ENCODE measurements at regions of chr15 and their contacts with region 1.

Region 1: DNA sequence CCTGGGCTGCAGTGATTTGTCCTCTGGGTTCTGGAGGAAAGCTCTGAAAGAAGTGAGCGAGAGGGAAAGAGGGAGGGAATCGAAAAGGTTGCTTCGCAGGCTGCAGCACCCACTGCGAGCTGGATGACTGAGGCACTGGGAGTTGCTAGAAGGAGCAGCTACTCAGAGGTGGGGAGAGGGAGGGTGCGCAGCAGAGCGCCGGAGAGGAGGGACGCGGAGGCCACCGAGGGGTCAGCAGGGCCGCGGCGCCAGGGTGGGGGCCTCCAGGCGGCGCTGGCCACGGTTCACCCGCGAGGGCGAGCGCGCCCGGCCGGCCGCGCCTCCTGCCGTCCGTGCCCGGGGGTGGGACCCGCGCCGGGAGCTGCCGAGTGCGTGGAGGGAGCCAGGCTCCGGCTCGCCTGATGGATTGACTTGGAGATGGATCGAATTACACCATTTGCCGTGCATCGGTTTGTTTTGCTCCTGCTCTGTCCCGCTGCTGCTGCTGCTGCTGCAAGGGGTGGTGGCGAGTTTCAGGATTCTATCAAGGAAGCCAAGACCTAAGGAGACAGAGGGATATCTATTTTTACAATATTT is at the start of gene SEMA6D:
- DNase-seq: peak; percentile 57
- H3K4me3 ChIP-seq: peak within 1 kb of the TSS; percentile 34 to 56 (median 48)
- H3K27ac ChIP-seq: no peak within 1 kb of the TSS
- H3K4me1 ChIP-seq: peaks cover 12% of the 10 kb centered on the region
- H3K27me3 ChIP-seq: peaks cover 10% of the 10 kb centered on the region
- CTCF ChIP-seq: peak in 1 of 2 donors; percentile 22
- total RNA-seq, gene SEMA6D: under 0.01 to 0.35 TPM

Region 2: DNA sequence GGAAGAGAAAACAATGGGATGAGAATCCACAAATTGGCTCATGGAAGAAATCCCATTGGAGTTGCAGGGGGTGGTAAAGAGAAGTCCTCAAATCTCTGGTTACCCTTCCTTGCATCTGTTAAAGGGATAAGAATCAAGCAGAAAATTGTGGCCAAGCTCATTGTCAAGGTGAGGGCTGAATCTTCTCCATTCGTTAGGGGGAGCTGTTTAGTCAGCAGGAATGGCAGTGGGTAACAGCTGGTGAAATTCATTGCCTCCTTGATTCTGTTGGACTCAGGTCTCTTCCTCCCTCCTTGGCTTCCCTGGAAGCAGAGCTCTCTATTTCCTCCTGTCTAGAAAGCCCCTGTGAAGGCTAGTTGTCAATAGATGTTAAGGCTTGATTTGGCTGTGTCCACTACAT is 342.9 kb before region 1 on chr15:
- CTCF ChIA-PET with region 1: interaction called, 3 read pairs
- dilution Hi-C with region 1: no loop called
- in situ Hi-C with region 1: no loop called
- intact Hi-C with region 1: loop called (anchors 5 kb)
- DNase-seq: peak; percentile 23
- H3K4me3 ChIP-seq: no peak overlapping the region
- H3K27ac ChIP-seq: no peak overlapping the region
- H3K4me1 ChIP-seq: no peaks in the 10 kb centered on the region
- H3K27me3 ChIP-seq: no peaks in the 10 kb centered on the region
- CTCF ChIP-seq: peak; percentile 33 to 65

Region 3: GRCh38 chr15:47610736-47611135 is 106.4 kb before region 1 on chr15:
- CTCF ChIA-PET with region 1: no interaction called
- dilution Hi-C with region 1: no loop called
- in situ Hi-C with region 1: no loop called
- intact Hi-C with region 1: no loop called
- DNase-seq: no peak
- H3K4me3 ChIP-seq: no peak overlapping the region
- H3K27ac ChIP-seq: no peak overlapping the region
- H3K4me1 ChIP-seq: no peaks in the 10 kb centered on the region
- H3K27me3 ChIP-seq: no peaks in the 10 kb centered on the region
- CTCF ChIP-seq: peak in 1 of 2 donors; percentile 6

Region 4: GRCh38 chr15:47750030-47750739 is 33.1 kb after region 1 on chr15:
- CTCF ChIA-PET with region 1: no interaction called
- dilution Hi-C with region 1: no loop called
- in situ Hi-C with region 1: no loop called
- intact Hi-C with region 1: loop called (anchors 5 kb)
- DNase-seq: peak; percentile 76
- H3K4me3 ChIP-seq: no peak overlapping the region
- H3K27ac ChIP-seq: no peak overlapping the region
- H3K4me1 ChIP-seq: peaks cover 13% of the 10 kb centered on the region
- H3K27me3 ChIP-seq: no peaks in the 10 kb centered on the region
- CTCF ChIP-seq: no peak

Region 5: GRCh38 chr15:47803767-47804166 is 86.6 kb after region 1 on chr15:
- CTCF ChIA-PET with region 1: no interaction called
- dilution Hi-C with region 1: no loop called
- in situ Hi-C with region 1: no loop called
- intact Hi-C with region 1: loop called (anchors 5 kb)
- DNase-seq: peak; percentile 65
- H3K4me3 ChIP-seq: no peak overlapping the region
- H3K27ac ChIP-seq: no peak overlapping the region
- H3K4me1 ChIP-seq: peaks cover 16% of the 10 kb centered on the region
- H3K27me3 ChIP-seq: no peaks in the 10 kb centered on the region
- CTCF ChIP-seq: no peak

Region 6: DNA sequence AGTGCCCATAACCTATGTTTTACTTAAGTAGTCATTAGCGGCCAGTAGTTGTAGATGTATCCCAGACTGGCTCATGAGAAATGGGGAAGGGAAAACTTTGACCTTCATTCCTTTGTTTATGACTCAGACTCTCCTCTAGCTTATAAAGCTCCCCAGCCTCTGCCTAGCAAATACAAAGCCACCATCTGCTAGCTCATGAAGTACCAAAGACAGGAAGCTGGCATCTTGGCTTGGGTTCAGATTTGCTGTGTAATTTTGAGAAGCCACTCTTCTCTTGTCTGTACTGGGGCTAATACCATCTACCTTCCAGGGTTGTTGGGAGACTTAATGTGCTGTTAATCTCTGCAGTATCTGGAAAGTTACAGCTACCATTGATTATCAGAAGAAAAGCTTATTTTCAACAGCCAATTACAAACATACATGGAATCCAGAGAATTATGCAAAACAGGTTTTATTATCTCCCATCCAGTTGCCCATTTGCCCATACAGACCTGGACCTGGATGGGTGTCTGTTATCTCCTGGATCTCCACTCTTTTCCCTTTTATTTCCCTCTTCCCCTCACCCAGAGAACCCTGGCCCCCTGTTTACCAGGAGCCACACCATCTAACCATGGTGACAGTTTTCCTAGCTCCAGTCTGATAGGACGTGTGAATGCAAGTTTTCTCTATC is 154.0 kb after region 1 on chr15:
- CTCF ChIA-PET with region 1: no interaction called
- dilution Hi-C with region 1: no loop called
- in situ Hi-C with region 1: no loop called
- intact Hi-C with region 1: loop called (anchors 5 kb)
- DNase-seq: peak; percentile 12
- H3K4me3 ChIP-seq: no peak overlapping the region
- H3K27ac ChIP-seq: no peak overlapping the region
- H3K4me1 ChIP-seq: no peaks in the 10 kb centered on the region
- H3K27me3 ChIP-seq: no peaks in the 10 kb centered on the region
- CTCF ChIP-seq: no peak

Region 7: GRCh38 chr15:48177766-48178647 is 460.9 kb after region 1 on chr15 and contains the start of gene MYEF2:
- CTCF ChIA-PET with region 1: no interaction called
- dilution Hi-C with region 1: no loop called
- in situ Hi-C with region 1: no loop called
- intact Hi-C with region 1: no loop called
- DNase-seq: peak; percentile 18
- H3K4me3 ChIP-seq: peak within 1 kb of the TSS; percentile 26 to 49 (median 47)
- H3K27ac ChIP-seq: no peak within 1 kb of the TSS
- H3K4me1 ChIP-seq: peaks cover 6% of the 10 kb centered on the region
- H3K27me3 ChIP-seq: peaks cover 11% of the 10 kb centered on the region
- CTCF ChIP-seq: no peak
- total RNA-seq, gene MYEF2: 2.3 to 5.0 TPM

Region 8: GRCh38 chr15:48285329-48286214 is 568.4 kb after region 1 on chr15:
- CTCF ChIA-PET with region 1: interaction called, 4 read pairs
- dilution Hi-C with region 1: no loop called
- in situ Hi-C with region 1: no loop called
- intact Hi-C with region 1: loop called (anchors 10 kb)
- DNase-seq: peak; percentile 63
- H3K4me3 ChIP-seq: no peak overlapping the region
- H3K27ac ChIP-seq: no peak overlapping the region
- H3K4me1 ChIP-seq: no peaks in the 10 kb centered on the region
- H3K27me3 ChIP-seq: peaks cover 6% of the 10 kb centered on the region
- CTCF ChIP-seq: peak; percentile 66 to 67

Measured in mammary epithelial cell (primary cell).